Natural killer cell (primary cell): ENCODE measurements at regions of chr19 and their contacts with region 1.

Region 1: GRCh38 chr19:16259385-16260159 is 61.9 kb downstream of the AP1M1 start:
- DNase-seq: no peak
- ATAC-seq: no peak
- H3K4me3 ChIP-seq: no peak overlapping the region
- H3K4me3 Mint-ChIP-seq: no peak overlapping the region
- H3K27ac ChIP-seq: peak overlapping the region; percentile 67
- H3K27ac Mint-ChIP-seq: peak overlapping the region in 1 of 2 donors; percentile 41
- H3K4me1 ChIP-seq: peaks cover 75% of the 10 kb centered on the region
- H3K4me1 Mint-ChIP-seq: peaks cover 28 to 51% of the 10 kb centered on the region in 2 donors
- H3K27me3 ChIP-seq: no peaks in the 10 kb centered on the region
- H3K27me3 Mint-ChIP-seq: peaks cover 0 to 3% of the 10 kb centered on the region in 2 donors
- CTCF ChIP-seq: no peak

Region 2: DNA sequence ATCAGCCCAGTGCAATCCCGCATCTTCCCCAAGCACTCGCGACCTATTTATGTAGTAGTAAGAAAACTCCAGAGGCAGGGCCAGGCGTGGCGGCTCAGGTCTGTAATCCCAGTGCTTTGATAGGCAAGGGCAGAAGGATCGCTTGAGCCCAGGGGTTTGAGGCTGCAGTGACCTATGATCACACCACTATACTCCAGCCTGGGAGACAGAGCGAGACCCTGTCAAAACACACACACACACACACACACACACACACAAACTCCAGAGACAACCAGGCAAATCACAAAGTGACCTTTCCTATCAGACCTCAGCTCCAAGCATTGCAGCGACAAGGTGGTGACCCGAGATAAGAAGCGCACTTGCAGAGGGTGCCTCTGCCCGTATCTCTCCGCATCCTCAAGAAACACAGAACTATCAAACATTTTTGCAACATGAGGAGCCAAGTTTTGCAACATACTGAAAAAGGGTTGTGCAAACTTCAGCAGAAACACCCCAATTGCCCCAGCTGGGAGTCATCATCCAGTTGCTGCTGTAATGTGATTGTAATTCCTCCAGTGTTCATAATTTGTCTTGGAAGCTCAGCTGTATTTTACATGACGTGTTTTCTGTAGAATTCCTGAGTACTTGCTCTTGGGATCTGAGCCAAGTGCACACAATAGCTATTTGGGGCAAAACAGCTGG is 56.4 kb after region 1 on chr19:
- intact Hi-C with region 1: loop called (anchors 10 kb)
- DNase-seq: no peak
- ATAC-seq: peak in 1 of 3 donors; percentile 73
- H3K4me3 ChIP-seq: no peak overlapping the region
- H3K4me3 Mint-ChIP-seq: no peak overlapping the region
- H3K27ac ChIP-seq: no peak overlapping the region
- H3K27ac Mint-ChIP-seq: no peak overlapping the region
- H3K4me1 ChIP-seq: peaks cover 9% of the 10 kb centered on the region
- H3K4me1 Mint-ChIP-seq: peaks cover 0 to 5% of the 10 kb centered on the region in 2 donors
- H3K27me3 ChIP-seq: no peaks in the 10 kb centered on the region
- H3K27me3 Mint-ChIP-seq: peaks cover 5 to 11% of the 10 kb centered on the region in 2 donors
- CTCF ChIP-seq: no peak